ENCODE measurements at regions of chr1 and their contacts with region 1.

Region 1: GRCh38 chr1:172969611-172970010 is 81.1 kb downstream of the TNFSF18 start:
- DNase-seq: peak; percentile 95
- H3K4me3 ChIP-seq: no peak overlapping the region
- H3K27me3 ChIP-seq: no peaks in the 10 kb centered on the region
- CTCF ChIP-seq: 0 out of 2 replicates have a peak, but pooled peaks have one; percentile 6

Region 2: GRCh38 chr1:172906778-172907592 is 62.6 kb before region 1 on chr1:
- CTCF ChIA-PET with region 1: interaction called, 3 read pairs
- POLR2A ChIA-PET with region 1: interaction called, 19 read pairs
- DNase-seq: peak; percentile 68
- H3K4me3 ChIP-seq: no peak overlapping the region
- H3K27me3 ChIP-seq: no peaks in the 10 kb centered on the region
- CTCF ChIP-seq: no peak

Region 3: GRCh38 chr1:173377266-173377665 is 407.7 kb after region 1 on chr1:
- CTCF ChIA-PET with region 1: no interaction called
- POLR2A ChIA-PET with region 1: no interaction called
- DNase-seq: no peak
- H3K4me3 ChIP-seq: no peak overlapping the region
- H3K27me3 ChIP-seq: no peaks in the 10 kb centered on the region
- CTCF ChIP-seq: no peak

Region 4: DNA sequence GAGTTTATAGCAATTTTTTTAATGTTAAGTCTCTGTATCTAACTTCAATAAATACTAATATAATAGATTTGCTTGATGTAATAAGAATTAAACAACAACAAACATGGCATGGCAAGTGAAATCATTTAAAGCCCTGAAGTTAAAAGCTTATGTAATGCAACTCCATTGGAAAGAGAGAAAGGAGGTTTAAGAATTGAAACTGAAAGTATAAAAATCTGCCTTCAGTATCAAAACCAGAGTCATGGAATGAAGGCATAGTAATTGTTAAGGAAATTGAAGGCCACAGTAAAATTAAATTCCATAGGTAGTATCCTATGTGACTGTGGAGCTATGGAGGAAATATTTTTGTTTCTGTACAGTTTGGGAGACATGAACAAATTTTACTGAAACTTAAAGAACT is 562.6 kb after region 1 on chr1:
- CTCF ChIA-PET with region 1: no interaction called
- POLR2A ChIA-PET with region 1: no interaction called
- DNase-seq: no peak
- H3K4me3 ChIP-seq: no peak overlapping the region
- H3K27me3 ChIP-seq: 0 out of 2 replicates have a peak, but pooled peaks cover 2% of the 10 kb centered on the region
- CTCF ChIP-seq: no peak